ENCODE measurements at regions of chr13 and their contacts with region 1.

Region 1: GRCh38 chr13:76886292-76887075 is at the start of gene KCTD12:
- DNase-seq: peak; percentile 54 to 87 (median 77)
- ATAC-seq: peak; percentile 78
- H3K4me3 ChIP-seq: peak within 1 kb of the TSS; percentile 69 to 82
- H3K4me3 Mint-ChIP-seq: peak within 1 kb of the TSS; percentile 86
- H3K27ac ChIP-seq: peak within 1 kb of the TSS in 1 of 2 experiments; percentile 49
- H3K27ac Mint-ChIP-seq: peak within 1 kb of the TSS; percentile 83
- H3K4me1 ChIP-seq: peaks cover 28% of the 10 kb centered on the region
- H3K4me1 Mint-ChIP-seq: peaks cover 25% of the 10 kb centered on the region
- H3K27me3 ChIP-seq: peaks cover 0 to 14% of the 10 kb centered on the region in 2 experiments
- H3K27me3 Mint-ChIP-seq: peaks cover 12% of the 10 kb centered on the region
- CTCF ChIP-seq: no peak
- total RNA-seq, gene KCTD12: 2.4 to 2.6 TPM

Region 2: DNA sequence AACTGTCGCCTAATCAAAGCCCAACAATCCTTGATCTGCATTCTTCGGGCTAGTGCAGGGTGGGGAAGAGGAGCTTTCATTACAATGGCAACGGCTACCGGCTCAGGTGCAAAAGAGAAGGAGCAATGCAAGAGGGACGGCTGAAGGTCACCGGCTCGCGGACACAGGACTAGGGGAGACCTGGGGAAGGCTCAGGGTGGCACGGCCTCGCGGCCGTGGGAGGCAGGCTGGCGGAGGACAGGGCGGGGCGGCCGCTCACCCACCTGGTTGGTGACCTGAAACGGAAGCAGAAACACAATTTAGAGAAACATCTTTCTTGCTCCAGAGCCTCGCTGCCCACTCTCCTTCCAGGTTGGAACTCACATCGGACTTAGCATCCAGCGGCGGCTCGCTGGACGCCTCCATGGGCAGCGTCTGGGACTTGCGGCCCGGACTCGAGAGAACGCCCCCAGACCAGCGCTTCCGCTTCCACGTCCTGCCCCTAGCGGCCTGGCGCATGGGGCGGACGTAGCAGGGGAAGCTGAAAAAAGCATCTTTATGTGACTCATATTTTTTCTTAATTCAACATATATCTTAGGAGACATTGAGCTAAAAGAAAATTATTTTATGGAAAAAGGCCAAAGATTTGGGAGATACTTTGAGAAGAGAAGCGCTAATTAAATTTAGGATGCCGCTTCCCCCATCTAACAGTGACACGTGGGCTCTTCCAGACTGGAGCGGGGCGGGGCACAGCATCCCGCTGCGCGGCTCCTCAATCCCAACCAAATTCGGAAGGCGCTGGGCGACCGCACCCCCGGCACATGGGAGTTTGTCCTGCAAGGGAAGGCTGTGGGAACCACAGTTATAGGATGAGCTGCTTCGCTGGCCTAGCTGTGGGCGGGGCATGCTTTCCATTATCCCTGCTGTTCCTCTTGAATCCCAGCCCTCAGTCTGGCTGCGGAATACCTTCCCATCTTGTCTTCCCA is 1348.8 kb before region 1 on chr13 and contains the start of gene COMMD6:
- CTCF ChIA-PET with region 1: no interaction called
- POLR2A ChIA-PET with region 1: no interaction called
- intact Hi-C with region 1: loop called in 1 of 2 experiments (anchors 10 kb)
- DNase-seq: peak; percentile 34 to 86 (median 68)
- ATAC-seq: peak; percentile 94
- H3K4me3 ChIP-seq: peak within 1 kb of the TSS; percentile 71 to 87
- H3K4me3 Mint-ChIP-seq: peak within 1 kb of the TSS; percentile 98
- H3K27ac ChIP-seq: peak within 1 kb of the TSS; percentile 43 to 71
- H3K27ac Mint-ChIP-seq: peak within 1 kb of the TSS; percentile 96
- H3K4me1 ChIP-seq: peaks cover 14% of the 10 kb centered on the region
- H3K4me1 Mint-ChIP-seq: peaks cover 46% of the 10 kb centered on the region
- H3K27me3 ChIP-seq: no peaks in the 10 kb centered on the region
- H3K27me3 Mint-ChIP-seq: no peaks in the 10 kb centered on the region
- CTCF ChIP-seq: no peak
- total RNA-seq, gene COMMD6: 191 to 204 TPM

Region 3: DNA sequence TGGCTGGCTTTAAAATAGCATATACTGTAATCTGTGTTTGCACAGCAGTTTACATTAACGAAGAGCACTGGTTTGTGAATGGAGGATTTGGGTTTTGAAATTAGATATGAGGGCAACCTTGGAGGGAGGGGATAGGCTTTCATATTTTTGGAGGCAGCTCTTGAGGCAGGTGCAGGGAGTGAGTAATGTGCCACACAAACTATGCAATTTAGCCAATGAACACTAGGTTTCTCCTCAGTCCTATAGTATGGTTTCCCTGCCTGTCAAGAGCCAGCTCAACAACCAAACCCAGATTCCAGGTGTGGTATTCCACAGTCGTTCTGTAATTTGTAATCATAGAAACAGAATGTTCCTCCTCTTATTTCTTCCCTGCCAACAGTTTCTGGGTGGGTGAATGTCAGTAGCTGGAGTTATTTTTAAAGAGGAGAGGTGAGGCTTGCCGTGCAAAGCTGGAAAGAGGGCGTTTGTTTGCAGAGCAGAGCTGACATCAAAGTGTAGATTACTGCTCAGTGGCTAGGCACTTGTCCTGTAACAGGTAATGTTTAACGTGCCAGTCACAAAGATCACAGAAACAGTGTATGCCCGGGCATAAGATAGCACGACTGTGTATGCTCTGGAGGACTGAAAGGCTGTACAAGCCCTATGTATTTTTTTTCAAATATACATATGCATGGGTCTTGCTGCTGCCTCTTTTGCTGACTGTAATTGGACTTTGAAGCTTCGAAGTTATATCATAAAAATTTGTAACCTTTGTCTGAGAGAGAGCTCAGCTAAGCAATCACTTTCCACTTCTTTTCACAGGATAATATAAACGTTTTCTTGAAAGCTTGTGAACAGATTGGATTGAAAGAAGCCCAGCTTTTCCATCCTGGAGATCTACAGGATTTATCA is 1126.1 kb before region 1 on chr13:
- CTCF ChIA-PET with region 1: interaction called, 5 read pairs
- POLR2A ChIA-PET with region 1: interaction called, 7 read pairs
- intact Hi-C with region 1: loop called (anchors 5 to 10 kb)
- DNase-seq: peak in 4 of 9 experiments; percentile 10 to 60 (median 46)
- ATAC-seq: peak; percentile 71
- H3K4me3 ChIP-seq: peak overlapping the region; percentile 32 to 40
- H3K4me3 Mint-ChIP-seq: peak overlapping the region; percentile 83
- H3K27ac ChIP-seq: peak overlapping the region in 1 of 2 experiments; percentile 50
- H3K27ac Mint-ChIP-seq: peak overlapping the region; percentile 84
- H3K4me1 ChIP-seq: peaks cover 34% of the 10 kb centered on the region
- H3K4me1 Mint-ChIP-seq: peaks cover 59% of the 10 kb centered on the region
- H3K27me3 ChIP-seq: no peaks in the 10 kb centered on the region
- H3K27me3 Mint-ChIP-seq: no peaks in the 10 kb centered on the region
- CTCF ChIP-seq: peak; percentile 17

Region 4: DNA sequence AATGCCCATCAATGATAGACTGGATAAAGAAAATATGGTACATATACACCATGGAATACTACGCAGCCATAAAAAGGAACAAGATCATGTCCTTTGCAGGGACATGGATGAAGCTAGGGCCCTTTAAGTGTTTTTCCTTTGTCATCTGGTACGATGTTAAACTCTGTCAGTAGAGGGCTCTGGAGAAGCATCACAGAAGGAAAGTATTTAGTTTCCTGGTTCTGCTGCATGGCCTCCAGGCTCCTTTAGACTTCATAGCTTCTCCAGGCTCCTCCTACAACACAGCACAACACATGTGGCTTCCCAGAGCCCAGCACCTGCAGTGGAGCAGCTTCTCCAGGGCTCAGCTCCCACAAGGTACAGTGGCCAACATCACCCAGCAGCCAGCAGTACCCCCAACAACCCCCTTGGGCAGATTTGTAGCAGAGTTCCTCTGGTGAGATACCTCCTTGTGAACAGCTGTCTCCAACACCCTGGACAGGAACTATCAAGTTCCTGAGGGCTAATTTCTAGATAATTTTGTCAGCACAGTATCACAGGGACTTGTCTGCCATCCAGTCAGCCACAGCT is 63.7 kb before region 1 on chr13:
- CTCF ChIA-PET with region 1: interaction called, 6 read pairs
- POLR2A ChIA-PET with region 1: interaction called, 6 read pairs
- intact Hi-C with region 1: loop called in 1 of 2 experiments (anchors 1 kb)
- DNase-seq: peak in 2 of 9 experiments; percentile 9 to 30
- ATAC-seq: no peak
- H3K4me3 ChIP-seq: no peak overlapping the region
- H3K4me3 Mint-ChIP-seq: no peak overlapping the region
- H3K27ac ChIP-seq: no peak overlapping the region
- H3K27ac Mint-ChIP-seq: no peak overlapping the region
- H3K4me1 ChIP-seq: no peaks in the 10 kb centered on the region
- H3K4me1 Mint-ChIP-seq: no peaks in the 10 kb centered on the region
- H3K27me3 ChIP-seq: no peaks in the 10 kb centered on the region
- H3K27me3 Mint-ChIP-seq: peaks cover 2% of the 10 kb centered on the region
- CTCF ChIP-seq: no peak

Region 5: DNA sequence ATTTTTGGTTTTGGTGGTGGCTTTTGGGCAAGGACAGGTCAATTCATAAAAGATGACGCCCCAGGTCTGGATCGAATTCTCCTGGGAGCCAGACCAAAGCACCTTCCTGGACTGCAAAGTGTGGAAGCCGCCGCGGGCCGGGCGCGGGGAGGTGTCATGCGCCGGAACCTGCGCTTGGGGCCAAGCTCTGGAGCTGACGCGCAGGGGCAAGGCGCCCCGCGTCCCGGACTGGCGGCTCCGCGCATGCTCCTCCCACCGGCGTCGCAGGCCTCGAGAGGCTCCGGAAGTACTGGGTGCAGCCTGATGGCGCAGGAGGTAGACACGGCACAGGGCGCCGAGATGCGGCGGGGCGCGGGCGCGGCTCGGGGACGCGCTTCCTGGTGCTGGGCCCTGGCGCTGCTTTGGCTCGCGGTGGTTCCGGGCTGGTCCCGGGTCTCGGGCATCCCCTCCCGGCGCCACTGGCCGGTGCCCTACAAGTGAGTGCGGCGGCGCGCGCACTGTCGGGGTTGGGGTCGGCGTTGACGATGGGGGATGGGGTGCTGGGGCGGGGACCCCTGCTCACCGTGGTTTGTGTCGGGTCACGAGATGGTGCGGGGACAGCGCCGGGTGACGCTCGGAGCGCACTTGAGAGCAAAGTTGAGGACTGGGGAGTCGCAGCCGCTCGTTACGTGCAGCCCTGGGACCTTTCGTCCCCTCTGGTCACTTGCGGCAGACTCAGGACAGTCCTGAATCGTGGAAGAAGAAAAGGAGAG is 105.5 kb after region 1 on chr13 and contains the start of gene CLN5:
- CTCF ChIA-PET with region 1: no interaction called
- POLR2A ChIA-PET with region 1: interaction called, 20 read pairs
- intact Hi-C with region 1: loop called (anchors 1 to 2 kb)
- DNase-seq: peak; percentile 91 to 98 (median 94)
- ATAC-seq: peak; percentile 83
- H3K4me3 ChIP-seq: peak within 1 kb of the TSS; percentile 72 to 86
- H3K4me3 Mint-ChIP-seq: peak within 1 kb of the TSS; percentile 95
- H3K27ac ChIP-seq: peak within 1 kb of the TSS; percentile 84 to 97
- H3K27ac Mint-ChIP-seq: peak within 1 kb of the TSS; percentile 99
- H3K4me1 ChIP-seq: peaks cover 31% of the 10 kb centered on the region
- H3K4me1 Mint-ChIP-seq: peaks cover 53% of the 10 kb centered on the region
- H3K27me3 ChIP-seq: peaks cover 0 to 13% of the 10 kb centered on the region in 2 experiments
- H3K27me3 Mint-ChIP-seq: peaks cover 12% of the 10 kb centered on the region
- CTCF ChIP-seq: no peak
- total RNA-seq, gene CLN5: 23.3 to 23.4 TPM

Region 6: DNA sequence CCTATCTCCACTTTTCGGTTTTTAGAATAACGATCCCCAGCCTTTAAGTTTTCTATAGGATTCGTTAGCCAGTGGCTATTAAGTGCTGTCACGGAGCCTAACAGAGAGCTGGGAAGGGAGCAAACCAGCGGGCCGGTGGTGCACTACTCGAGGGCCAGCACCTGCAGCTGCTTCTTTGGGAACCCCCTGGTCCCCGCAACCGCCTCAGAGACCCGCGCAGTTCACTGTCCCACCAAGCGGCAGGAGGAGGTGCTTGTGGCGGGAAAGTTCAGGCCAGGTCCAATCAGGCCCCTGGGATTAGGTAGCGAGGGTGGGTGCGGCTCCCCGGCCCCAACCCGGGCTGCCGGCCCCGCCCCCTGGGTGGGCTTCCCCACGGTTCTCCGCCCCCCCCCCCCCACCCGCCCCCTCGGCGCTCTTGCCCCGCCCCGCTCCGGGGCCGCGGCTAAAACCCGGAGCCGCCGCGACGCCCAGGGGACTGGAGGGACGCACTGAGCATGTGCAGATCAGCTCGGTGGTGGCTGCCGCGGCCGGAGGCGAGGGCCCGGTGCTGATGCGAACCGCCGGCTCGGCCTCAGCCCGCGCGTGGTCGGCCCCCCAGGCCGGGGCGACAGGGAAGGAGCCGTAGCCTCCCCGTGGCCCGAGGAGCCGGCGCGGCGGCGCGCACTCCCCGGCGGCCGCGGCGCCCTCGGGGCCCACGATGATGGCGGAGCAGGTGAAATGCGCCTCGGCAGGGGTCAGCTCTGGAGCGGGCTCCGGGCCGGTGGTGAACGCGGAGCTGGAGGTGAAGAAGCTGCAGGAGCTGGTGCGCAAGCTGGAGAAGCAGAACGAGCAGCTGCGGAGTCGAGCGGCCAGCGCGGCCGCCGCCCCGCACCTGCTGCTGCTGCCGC is 811.0 kb after region 1 on chr13 and contains the start of gene SLAIN1:
- CTCF ChIA-PET with region 1: no interaction called
- POLR2A ChIA-PET with region 1: interaction called, 4 read pairs
- intact Hi-C with region 1: loop called (anchors 5 kb)
- DNase-seq: peak; percentile 65 to 94 (median 86)
- ATAC-seq: peak; percentile 80
- H3K4me3 ChIP-seq: peak within 1 kb of the TSS; percentile 88
- H3K4me3 Mint-ChIP-seq: peak within 1 kb of the TSS; percentile 96
- H3K27ac ChIP-seq: peak within 1 kb of the TSS; percentile 54 to 71
- H3K27ac Mint-ChIP-seq: peak within 1 kb of the TSS; percentile 97
- H3K4me1 ChIP-seq: peaks cover 35% of the 10 kb centered on the region
- H3K4me1 Mint-ChIP-seq: peaks cover 44% of the 10 kb centered on the region
- H3K27me3 ChIP-seq: no peaks in the 10 kb centered on the region
- H3K27me3 Mint-ChIP-seq: no peaks in the 10 kb centered on the region
- CTCF ChIP-seq: no peak
- total RNA-seq, gene SLAIN1: 35.4 to 36.4 TPM

Measured in CD8-positive, alpha-beta T cell (primary cell).